Naive thymus-derived CD4-positive, alpha-beta T cell (primary cell): ENCODE measurements at regions of chr5 and their contacts with region 1.

Region 1: GRCh38 chr5:119315516-119315949 is 40.3 kb upstream of the TNFAIP8 start:
- DNase-seq: peak in 7 of 9 donors; percentile 60 to 78 (median 67)
- ATAC-seq: peak; percentile 93
- H3K4me3 ChIP-seq: peak overlapping the region; percentile 25
- H3K4me3 Mint-ChIP-seq: peak overlapping the region; percentile 27 to 90 (median 60)
- H3K27ac ChIP-seq: peak overlapping the region; percentile 69
- H3K27ac Mint-ChIP-seq: peak overlapping the region; percentile 73 to 98 (median 93)
- H3K4me1 ChIP-seq: peaks cover 72 to 93% of the 10 kb centered on the region in 2 donors
- H3K4me1 Mint-ChIP-seq: peaks cover 68 to 96% (median 92%) of the 10 kb centered on the region in 7 donors
- H3K27me3 ChIP-seq: no peaks in the 10 kb centered on the region
- H3K27me3 Mint-ChIP-seq: no peaks in the 10 kb centered on the region

Region 2: GRCh38 chr5:119070828-119071572 is 244.5 kb before region 1 on chr5 and contains the start of gene DMXL1:
- CTCF ChIA-PET with region 1: interaction called, 6 read pairs
- POLR2A ChIA-PET with region 1: interaction called, 6 read pairs
- intact Hi-C with region 1: loop called in 1 of 2 experiments (anchors 1 kb)
- DNase-seq: peak; percentile 94 to 99 (median 98)
- ATAC-seq: peak; percentile 92
- H3K4me3 ChIP-seq: peak within 1 kb of the TSS; percentile 63
- H3K4me3 Mint-ChIP-seq: peak within 1 kb of the TSS; percentile 90 to 100 (median 98)
- H3K27ac ChIP-seq: peak within 1 kb of the TSS; percentile 93
- H3K27ac Mint-ChIP-seq: peak within 1 kb of the TSS; percentile 96 to 100 (median 99)
- H3K4me1 ChIP-seq: peaks cover 22 to 25% of the 10 kb centered on the region in 2 donors
- H3K4me1 Mint-ChIP-seq: peaks cover 24 to 44% (median 38%) of the 10 kb centered on the region in 7 donors
- H3K27me3 ChIP-seq: no peaks in the 10 kb centered on the region
- H3K27me3 Mint-ChIP-seq: peaks cover 0 to 2% (median 0%) of the 10 kb centered on the region in 5 donors
- total RNA-seq, gene DMXL1: 30.5 to 40.8 (median 32.4) TPM

Region 3: GRCh38 chr5:119290161-119290569 is 25.4 kb before region 1 on chr5:
- CTCF ChIA-PET with region 1: interaction called, 10 read pairs
- POLR2A ChIA-PET with region 1: interaction called, 466 read pairs
- intact Hi-C with region 1: loop called in 1 of 2 experiments (anchors 1 kb)
- DNase-seq: peak in 1 of 9 donors; percentile 39
- ATAC-seq: peak; percentile 62
- H3K4me3 ChIP-seq: peak overlapping the region; percentile 47
- H3K4me3 Mint-ChIP-seq: peak overlapping the region; percentile 63 to 97 (median 82)
- H3K27ac ChIP-seq: peak overlapping the region; percentile 82
- H3K27ac Mint-ChIP-seq: peak overlapping the region; percentile 87 to 100 (median 96)
- H3K4me1 ChIP-seq: peaks cover 65% of the 10 kb centered on the region in 2 donors
- H3K4me1 Mint-ChIP-seq: peaks cover 67 to 95% (median 84%) of the 10 kb centered on the region in 7 donors
- H3K27me3 ChIP-seq: no peaks in the 10 kb centered on the region
- H3K27me3 Mint-ChIP-seq: no peaks in the 10 kb centered on the region

Region 4: DNA sequence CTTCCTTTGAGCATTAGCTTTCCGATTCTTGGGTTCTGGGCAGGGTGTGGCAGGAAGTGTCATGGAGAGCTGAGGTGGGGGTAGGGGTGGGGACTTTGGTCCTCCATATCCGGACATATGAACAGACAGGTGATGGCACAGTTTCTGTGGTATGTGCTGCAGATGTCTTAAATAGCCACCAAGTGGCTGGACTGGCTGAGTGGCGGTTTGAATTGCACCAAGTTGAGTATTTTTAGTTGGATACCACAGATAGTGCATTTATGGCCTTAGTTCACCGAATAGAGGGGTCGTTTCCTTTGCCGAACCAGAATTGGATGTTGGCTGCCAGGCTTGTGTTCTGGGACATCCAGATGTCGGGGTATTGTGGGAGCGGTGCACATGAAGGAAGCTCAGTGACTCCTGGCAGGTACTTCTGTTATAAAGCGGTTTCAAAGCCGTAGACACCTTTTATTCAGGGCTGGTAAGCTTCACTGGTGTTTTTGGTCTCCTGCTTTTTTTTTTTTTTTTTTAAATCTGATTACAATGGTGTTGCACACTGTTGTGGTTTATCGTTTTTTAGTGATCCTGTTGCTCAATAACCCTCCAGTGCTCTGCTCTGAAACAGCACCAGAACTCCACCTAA is 25.2 kb after region 1 on chr5:
- CTCF ChIA-PET with region 1: interaction called, 47 read pairs
- POLR2A ChIA-PET with region 1: interaction called, 32 read pairs
- intact Hi-C with region 1: loop called (anchors 1 kb)
- DNase-seq: peak in 7 of 9 donors; percentile 57 to 72 (median 64)
- ATAC-seq: peak; percentile 71
- H3K4me3 ChIP-seq: peak overlapping the region; percentile 33
- H3K4me3 Mint-ChIP-seq: peak overlapping the region; percentile 64 to 94 (median 86)
- H3K27ac ChIP-seq: peak overlapping the region; percentile 78
- H3K27ac Mint-ChIP-seq: peak overlapping the region; percentile 84 to 99 (median 94)
- H3K4me1 ChIP-seq: peaks cover 91 to 95% of the 10 kb centered on the region in 2 donors
- H3K4me1 Mint-ChIP-seq: peaks cover 78 to 98% (median 97%) of the 10 kb centered on the region in 7 donors
- H3K27me3 ChIP-seq: no peaks in the 10 kb centered on the region
- H3K27me3 Mint-ChIP-seq: no peaks in the 10 kb centered on the region

Region 5: DNA sequence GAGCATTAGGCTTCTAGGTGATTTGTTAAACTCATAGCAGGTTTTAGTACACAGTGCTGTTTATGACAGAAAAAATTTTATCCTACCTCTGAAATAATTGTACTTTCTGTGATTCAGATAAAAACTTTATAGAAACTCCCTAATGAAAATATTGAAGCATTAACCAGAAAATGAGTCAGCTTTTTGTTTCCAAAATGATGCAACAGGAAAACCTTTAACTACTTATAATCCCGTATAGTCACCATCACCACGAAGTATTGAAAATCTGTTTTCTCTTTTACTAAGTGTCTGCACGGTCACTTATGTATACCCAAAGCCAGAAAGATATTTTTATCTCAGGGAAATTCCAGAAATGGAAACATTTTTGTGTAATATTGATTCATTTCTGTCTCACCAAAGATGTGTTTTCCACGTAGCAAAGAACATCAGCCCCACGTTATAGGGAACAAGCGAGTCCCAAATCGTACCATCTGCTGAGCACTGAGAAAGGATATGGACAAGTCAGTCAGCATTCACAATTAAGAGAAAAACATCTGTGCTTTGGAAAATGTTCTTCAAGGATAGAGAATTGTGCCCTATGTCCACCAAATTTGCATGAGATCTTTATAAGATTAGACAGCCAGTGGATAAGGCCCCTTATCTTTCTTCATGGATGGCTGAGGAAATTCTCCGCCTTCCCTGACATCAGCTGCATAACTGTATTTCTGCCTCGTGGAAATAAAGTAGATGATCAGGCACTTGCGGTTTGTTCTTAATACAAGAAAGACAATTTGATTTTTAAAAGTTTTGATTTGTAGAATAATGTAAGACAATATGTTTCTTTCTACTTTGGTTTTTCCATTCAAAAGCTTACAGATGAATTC is 82.2 kb after region 1 on chr5:
- CTCF ChIA-PET with region 1: interaction called, 3 read pairs
- POLR2A ChIA-PET with region 1: interaction called, 4 read pairs
- intact Hi-C with region 1: loop called in 1 of 2 experiments (anchors 5 kb)
- DNase-seq: no peak
- ATAC-seq: peak; percentile 62
- H3K4me3 ChIP-seq: no peak overlapping the region
- H3K4me3 Mint-ChIP-seq: peak overlapping the region in 3 of 10 donors; percentile 1 to 37 (median 1)
- H3K27ac ChIP-seq: peak overlapping the region; percentile 25
- H3K27ac Mint-ChIP-seq: peak overlapping the region in 8 of 9 donors; percentile 8 to 82 (median 54)
- H3K4me1 ChIP-seq: no peaks in the 10 kb centered on the region
- H3K4me1 Mint-ChIP-seq: peaks cover 22 to 56% (median 53%) of the 10 kb centered on the region in 7 donors
- H3K27me3 ChIP-seq: no peaks in the 10 kb centered on the region
- H3K27me3 Mint-ChIP-seq: no peaks in the 10 kb centered on the region